Activated naive CD4-positive, alpha-beta T cell treated with anti-CD3 and anti-CD28 coated beads for 36 hours (primary cell): ENCODE measurements at regions of chr1 and their contacts with region 1.

Region 1: GRCh38 chr1:19485362-19486187 is at the start of gene CAPZB:
- DNase-seq: peak; percentile 95
- H3K4me3 Mint-ChIP-seq: peak within 1 kb of the TSS; percentile 96
- H3K27ac Mint-ChIP-seq: peak within 1 kb of the TSS; percentile 97
- H3K4me1 Mint-ChIP-seq: peaks cover 57% of the 10 kb centered on the region
- H3K27me3 Mint-ChIP-seq: no peaks in the 10 kb centered on the region
- total RNA-seq, gene CAPZB: 362 to 381 TPM

Region 2: DNA sequence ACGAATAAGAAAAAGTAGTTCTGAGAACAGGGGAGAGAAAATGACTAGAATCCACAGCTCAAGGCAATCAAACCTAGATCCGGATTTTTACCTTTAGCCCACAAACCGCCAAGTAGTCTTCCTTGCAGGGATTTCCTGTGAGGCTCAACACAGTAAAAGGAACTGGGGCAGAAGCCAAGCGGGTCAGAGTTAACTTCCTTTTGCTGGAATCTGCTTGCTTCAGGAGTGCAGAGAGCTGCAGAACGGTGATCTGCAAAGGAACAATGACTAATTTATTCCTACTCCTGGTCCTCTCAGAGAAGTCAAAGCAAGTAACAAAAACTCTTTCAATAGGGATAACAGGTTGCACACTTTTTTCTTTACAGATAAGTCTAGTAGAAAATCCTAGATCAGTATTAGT is 328.9 kb before region 1 on chr1:
- CTCF ChIA-PET with region 1: no interaction called
- intact Hi-C with region 1: no loop called
- DNase-seq: no peak
- H3K4me3 Mint-ChIP-seq: no peak overlapping the region
- H3K27ac Mint-ChIP-seq: no peak overlapping the region
- H3K4me1 Mint-ChIP-seq: peaks cover 8% of the 10 kb centered on the region
- H3K27me3 Mint-ChIP-seq: no peaks in the 10 kb centered on the region

Region 3: GRCh38 chr1:19390901-19391595 is 94.5 kb before region 1 on chr1:
- CTCF ChIA-PET with region 1: interaction called, 5 read pairs
- intact Hi-C with region 1: loop called (anchors 2 kb)
- DNase-seq: peak; percentile 69
- H3K4me3 Mint-ChIP-seq: peak overlapping the region; percentile 62
- H3K27ac Mint-ChIP-seq: peak overlapping the region; percentile 81
- H3K4me1 Mint-ChIP-seq: peaks cover 68% of the 10 kb centered on the region
- H3K27me3 Mint-ChIP-seq: no peaks in the 10 kb centered on the region

Region 4: GRCh38 chr1:19462781-19463503 is 22.6 kb before region 1 on chr1:
- CTCF ChIA-PET with region 1: interaction called, 10 read pairs
- intact Hi-C with region 1: loop called (anchors 1 kb)
- DNase-seq: peak; percentile 59
- H3K4me3 Mint-ChIP-seq: no peak overlapping the region
- H3K27ac Mint-ChIP-seq: peak overlapping the region; percentile 66
- H3K4me1 Mint-ChIP-seq: peaks cover 88% of the 10 kb centered on the region
- H3K27me3 Mint-ChIP-seq: no peaks in the 10 kb centered on the region

Region 5: GRCh38 chr1:19504796-19505692 is 19.5 kb after region 1 on chr1:
- CTCF ChIA-PET with region 1: interaction called, 10 read pairs
- intact Hi-C with region 1: no loop called
- DNase-seq: no peak
- H3K4me3 Mint-ChIP-seq: no peak overlapping the region
- H3K27ac Mint-ChIP-seq: no peak overlapping the region
- H3K4me1 Mint-ChIP-seq: peaks cover 26% of the 10 kb centered on the region
- H3K27me3 Mint-ChIP-seq: no peaks in the 10 kb centered on the region

Region 6: DNA sequence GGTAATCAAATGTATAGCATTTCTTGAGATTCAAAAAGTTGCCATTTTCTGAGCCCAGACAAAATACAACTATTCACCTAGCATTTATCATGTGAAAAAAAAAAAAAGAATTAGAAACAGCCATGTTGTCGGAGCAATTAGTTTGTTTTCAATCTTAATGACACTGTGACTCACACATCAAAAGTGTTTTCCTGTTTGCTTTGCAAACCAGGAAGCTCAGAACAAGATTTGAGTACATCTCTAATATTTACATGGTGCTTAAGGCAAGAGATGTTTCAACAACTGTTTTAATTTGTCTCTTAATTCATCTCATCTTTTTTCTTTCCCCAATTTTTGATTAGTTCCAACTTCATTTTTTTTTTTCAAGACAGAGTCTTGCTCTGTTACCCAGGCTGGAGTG is 62.2 kb after region 1 on chr1:
- CTCF ChIA-PET with region 1: no interaction called
- intact Hi-C with region 1: no loop called
- DNase-seq: no peak
- H3K4me3 Mint-ChIP-seq: no peak overlapping the region
- H3K27ac Mint-ChIP-seq: no peak overlapping the region
- H3K4me1 Mint-ChIP-seq: no peaks in the 10 kb centered on the region
- H3K27me3 Mint-ChIP-seq: no peaks in the 10 kb centered on the region

Region 7: DNA sequence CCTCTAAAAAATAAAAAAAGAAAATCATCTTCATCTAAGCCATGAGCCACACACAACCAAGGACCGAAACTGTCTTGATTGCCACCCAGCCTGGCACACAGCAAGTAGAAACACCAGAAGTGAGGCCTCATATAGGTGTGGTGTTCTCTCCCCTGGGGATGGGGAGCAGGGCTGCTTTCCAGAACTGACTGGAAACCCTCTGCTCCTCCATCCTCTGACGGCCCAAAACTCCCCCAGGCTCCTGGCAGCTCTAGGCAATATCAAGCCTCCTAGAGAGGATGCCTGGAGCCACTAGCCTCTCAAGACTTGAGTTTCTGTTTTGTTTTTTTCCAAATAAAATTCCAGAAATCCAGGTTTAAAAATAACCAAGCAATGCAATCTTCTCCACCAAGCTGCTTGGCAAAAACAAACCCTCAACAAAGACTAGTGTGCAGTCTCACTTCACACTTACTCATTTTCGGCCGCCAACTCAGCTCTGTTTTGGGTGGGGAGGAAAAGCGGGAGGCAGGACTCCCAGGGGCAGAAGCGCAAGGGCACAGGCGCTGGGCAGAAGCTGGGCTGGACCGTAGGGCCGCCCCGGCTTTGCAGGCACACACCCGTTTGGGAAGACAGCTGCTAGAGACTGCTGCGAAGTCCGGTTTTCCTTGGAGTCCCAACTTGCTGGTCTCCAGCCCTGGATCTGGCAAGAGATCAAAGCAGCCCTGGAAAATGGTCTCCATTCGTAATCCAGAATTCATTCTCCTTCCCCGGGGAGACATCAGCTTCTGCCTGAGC is 77.9 kb after region 1 on chr1:
- CTCF ChIA-PET with region 1: no interaction called
- intact Hi-C with region 1: no loop called
- DNase-seq: no peak
- H3K4me3 Mint-ChIP-seq: no peak overlapping the region
- H3K27ac Mint-ChIP-seq: no peak overlapping the region
- H3K4me1 Mint-ChIP-seq: peaks cover 3% of the 10 kb centered on the region
- H3K27me3 Mint-ChIP-seq: no peaks in the 10 kb centered on the region